CD4-positive, alpha-beta T cell (primary cell): ENCODE measurements at regions of chr1 and their contacts with region 1.

Region 1: GRCh38 chr1:39214998-39215873 is 10.7 kb downstream of the MACF1 start:
- DNase-seq: peak in 10 of 14 experiments; percentile 17 to 73 (median 32)
- ATAC-seq: peak; percentile 74
- H3K4me3 ChIP-seq: peak overlapping the region; percentile 62
- H3K4me3 Mint-ChIP-seq: peak overlapping the region; percentile 89
- H3K27ac ChIP-seq: peak overlapping the region; percentile 52 to 77
- H3K27ac Mint-ChIP-seq: peak overlapping the region; percentile 89
- H3K4me1 ChIP-seq: peaks cover 43% of the 10 kb centered on the region
- H3K4me1 Mint-ChIP-seq: peaks cover 59% of the 10 kb centered on the region
- H3K27me3 ChIP-seq: no peaks in the 10 kb centered on the region
- H3K27me3 Mint-ChIP-seq: no peaks in the 10 kb centered on the region
- CTCF ChIP-seq: no peak

Region 2: DNA sequence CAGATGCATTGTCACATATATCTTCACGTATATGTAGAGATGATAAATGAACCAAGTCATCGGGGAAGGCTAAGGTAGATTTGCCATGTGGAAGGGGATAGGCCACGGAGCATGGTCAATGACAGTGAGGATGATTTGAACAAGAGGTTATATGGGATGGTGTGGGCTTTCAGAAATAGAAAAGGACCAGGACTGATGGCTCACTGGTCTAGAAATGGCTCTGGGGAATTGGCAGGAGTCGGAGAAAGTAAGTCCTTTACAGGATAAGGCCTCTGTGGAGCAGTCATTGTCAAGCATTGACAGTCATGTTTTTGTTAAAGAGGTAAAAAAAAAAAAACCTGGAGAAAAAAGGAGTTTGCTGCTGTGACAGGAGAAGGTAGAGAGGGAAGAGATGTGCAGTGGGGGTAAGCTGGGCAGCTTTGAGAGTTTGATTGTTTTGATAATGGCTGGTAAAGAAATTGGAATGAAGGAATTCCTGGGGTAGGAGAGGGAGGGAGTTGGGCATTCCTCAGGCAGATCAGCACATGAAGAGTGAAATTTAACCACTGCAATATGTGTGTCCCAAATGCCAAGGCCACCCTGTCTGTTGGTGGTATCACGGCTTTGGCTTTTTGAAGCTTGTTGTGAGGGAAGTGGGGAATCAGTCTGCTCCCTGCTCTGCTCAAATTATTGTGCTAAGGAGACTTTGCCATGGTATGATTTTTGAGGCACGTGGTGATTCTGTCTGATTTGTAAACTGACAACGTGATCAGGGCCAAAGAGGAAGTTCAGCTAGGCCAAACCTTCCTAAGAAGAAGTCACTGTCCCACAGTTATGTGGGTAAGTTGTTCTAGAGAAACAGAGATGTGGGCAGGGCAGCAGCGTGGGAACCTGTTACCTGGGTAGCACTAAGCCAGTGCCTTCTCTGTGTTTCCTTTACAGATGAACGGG is 15.3 kb after region 1 on chr1:
- CTCF ChIA-PET with region 1: interaction called, 8 read pairs
- POLR2A ChIA-PET with region 1: interaction called, 4 read pairs
- intact Hi-C with region 1: loop called in 1 of 2 experiments (anchors 2 kb)
- DNase-seq: peak in 9 of 14 experiments; percentile 5 to 57 (median 37)
- ATAC-seq: peak; percentile 61
- H3K4me3 ChIP-seq: no peak overlapping the region
- H3K4me3 Mint-ChIP-seq: peak overlapping the region; percentile 64
- H3K27ac ChIP-seq: peak overlapping the region; percentile 6 to 44
- H3K27ac Mint-ChIP-seq: peak overlapping the region; percentile 89
- H3K4me1 ChIP-seq: peaks cover 44% of the 10 kb centered on the region
- H3K4me1 Mint-ChIP-seq: peaks cover 60% of the 10 kb centered on the region
- H3K27me3 ChIP-seq: no peaks in the 10 kb centered on the region
- H3K27me3 Mint-ChIP-seq: no peaks in the 10 kb centered on the region
- CTCF ChIP-seq: no peak